A549 (cell line): ENCODE measurements at regions of chr2 and their contacts with region 1.

Region 1: DNA sequence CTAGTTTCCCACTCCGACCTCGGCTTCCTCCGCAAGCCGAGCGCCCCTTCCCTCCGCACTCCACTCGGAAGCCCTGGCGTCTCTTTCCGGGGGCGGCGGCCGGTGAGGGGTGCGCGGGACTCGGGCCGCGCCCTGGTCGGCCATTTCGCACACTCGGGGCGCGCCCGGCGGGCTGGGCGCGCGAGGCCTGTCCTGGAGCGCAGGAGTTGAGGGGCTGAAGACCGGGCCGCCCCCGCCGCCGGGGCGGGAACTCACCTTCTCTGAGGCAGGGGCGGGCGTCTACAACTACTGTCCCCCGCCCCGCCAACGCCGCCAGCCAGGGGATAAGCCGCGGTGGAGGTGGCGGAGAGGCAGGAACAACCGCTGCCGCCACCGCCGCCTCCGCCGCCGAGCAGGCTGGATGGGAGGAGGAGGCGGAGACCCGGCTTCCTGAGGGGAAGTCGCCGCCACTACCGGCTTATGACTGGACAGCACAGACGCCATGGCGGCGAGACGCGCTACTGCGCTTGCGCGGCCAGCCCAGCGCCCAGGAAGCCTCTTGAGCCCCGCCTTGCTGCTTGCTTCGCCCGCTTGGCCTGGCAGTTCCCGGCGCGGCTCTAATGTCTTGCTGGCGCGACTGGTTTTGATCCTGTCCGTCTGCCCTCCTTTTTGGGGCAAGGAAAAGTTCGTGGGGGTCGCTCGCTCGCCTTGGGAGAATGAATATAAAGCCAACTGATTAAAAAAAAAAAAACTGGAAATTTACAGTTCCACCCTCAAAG is at the start of gene KRCC1:
- DNase-seq: peak; percentile 92 to 98
- ATAC-seq: peak; percentile 91 to 97
- H3K4me3 ChIP-seq: peak within 1 kb of the TSS; percentile 81
- H3K27ac ChIP-seq: peak within 1 kb of the TSS; percentile 96 to 100
- H3K4me1 ChIP-seq: peaks cover 24% of the 10 kb centered on the region
- CTCF ChIP-seq: no peak
- EP300 ChIP-seq: no peak
- POLR2A ChIP-seq: peak; percentile 94
- RAD21 ChIP-seq: 0 out of 5 replicates have a peak, but pooled peaks of 1 of the 2 experiments have one; percentile 16
- polyA plus RNA-seq, gene KRCC1: 37.2 and 49.0 TPM in 2 replicates

Region 2: GRCh38 chr2:88016086-88016959 is 39.2 kb before region 1 on chr2 and contains the start of gene RNU2-63P:
- CTCF ChIA-PET with region 1: interaction called, 6 read pairs
- POLR2A ChIA-PET with region 1: interaction called, 11 read pairs
- DNase-seq: peak; percentile 93
- ATAC-seq: peak; percentile 90 to 95
- H3K4me3 ChIP-seq: peak within 1 kb of the TSS; percentile 65
- H3K27ac ChIP-seq: peak within 1 kb of the TSS; percentile 90 to 95
- H3K4me1 ChIP-seq: peaks cover 12% of the 10 kb centered on the region
- CTCF ChIP-seq: no peak
- EP300 ChIP-seq: no peak; a peak in 1 of 5 replicates
- POLR2A ChIP-seq: peak; percentile 74
- RAD21 ChIP-seq: 0 out of 5 replicates have a peak, but pooled peaks of 1 of the 2 experiments have one; percentile 3
- polyA plus RNA-seq, gene RNU2-63P: 23.1 and 33.0 TPM in 2 replicates

Region 3: DNA sequence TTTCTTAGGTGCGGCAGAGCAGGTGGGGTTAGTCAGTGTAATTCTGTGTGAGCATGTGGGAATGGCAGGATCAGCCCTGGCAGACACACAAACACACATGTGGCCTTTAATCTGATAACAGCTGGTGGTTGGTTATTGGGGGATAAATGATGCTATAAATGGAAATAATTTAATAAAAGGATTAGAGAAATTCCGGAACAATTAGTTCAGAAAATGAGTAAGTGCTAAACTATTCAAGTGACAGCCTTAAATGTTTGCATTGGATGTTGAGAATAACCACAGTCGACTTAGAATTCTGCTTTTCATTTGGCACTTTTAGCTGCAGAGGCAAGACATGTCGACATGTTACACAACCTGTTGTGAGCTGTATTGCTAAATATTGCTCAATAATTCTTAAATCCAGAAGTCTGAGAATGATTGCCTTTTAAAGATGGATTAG is 19.3 kb after region 1 on chr2:
- CTCF ChIA-PET with region 1: interaction called, 45 read pairs
- POLR2A ChIA-PET with region 1: no interaction called
- DNase-seq: no peak
- ATAC-seq: no peak
- H3K4me3 ChIP-seq: no peak overlapping the region
- H3K27ac ChIP-seq: no peak overlapping the region
- H3K4me1 ChIP-seq: no peaks in the 10 kb centered on the region
- CTCF ChIP-seq: no peak
- EP300 ChIP-seq: no peak
- POLR2A ChIP-seq: no peak
- RAD21 ChIP-seq: no peak

Region 4: GRCh38 chr2:88099798-88100488 is 44.4 kb after region 1 on chr2:
- CTCF ChIA-PET with region 1: interaction called, 16 read pairs
- POLR2A ChIA-PET with region 1: no interaction called
- DNase-seq: peak; percentile 12 to 37
- ATAC-seq: peak in 1 of 2 experiments; percentile 72; a peak in 3 of 6 replicates
- H3K4me3 ChIP-seq: no peak overlapping the region
- H3K27ac ChIP-seq: no peak overlapping the region
- H3K4me1 ChIP-seq: no peaks in the 10 kb centered on the region
- CTCF ChIP-seq: no peak
- EP300 ChIP-seq: no peak
- POLR2A ChIP-seq: no peak
- RAD21 ChIP-seq: no peak

Region 5: DNA sequence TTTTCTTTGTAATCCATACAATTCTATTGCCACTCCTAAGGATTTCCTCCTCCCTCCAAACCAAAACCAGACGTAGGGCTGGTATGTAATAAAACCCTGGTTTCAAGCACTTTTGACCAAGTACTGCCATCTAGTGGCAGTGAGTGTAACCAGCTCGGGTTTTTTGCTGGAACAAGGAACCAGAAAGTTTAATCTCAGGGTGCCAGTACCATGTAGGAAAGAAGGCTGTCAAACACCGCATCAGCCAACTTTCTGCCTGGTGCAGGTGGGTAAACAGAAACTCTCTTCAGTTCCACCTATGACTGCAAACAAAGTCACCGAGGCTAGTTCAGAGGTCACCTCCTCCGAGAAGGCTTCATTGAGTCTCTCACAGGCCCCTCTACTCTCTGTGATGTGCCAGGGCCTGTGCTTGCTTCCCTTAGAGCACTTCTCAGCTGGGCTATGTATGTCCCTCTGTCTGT is 104.4 kb after region 1 on chr2:
- CTCF ChIA-PET with region 1: interaction called, 181 read pairs
- POLR2A ChIA-PET with region 1: interaction called, 7 read pairs
- DNase-seq: peak; percentile 58 to 68
- ATAC-seq: peak; percentile 82 to 89
- H3K4me3 ChIP-seq: no peak overlapping the region
- H3K27ac ChIP-seq: no peak overlapping the region
- H3K4me1 ChIP-seq: no peaks in the 10 kb centered on the region
- CTCF ChIP-seq: peak; percentile 93
- EP300 ChIP-seq: no peak
- POLR2A ChIP-seq: no peak
- RAD21 ChIP-seq: peak; percentile 92 to 93

Region 6: DNA sequence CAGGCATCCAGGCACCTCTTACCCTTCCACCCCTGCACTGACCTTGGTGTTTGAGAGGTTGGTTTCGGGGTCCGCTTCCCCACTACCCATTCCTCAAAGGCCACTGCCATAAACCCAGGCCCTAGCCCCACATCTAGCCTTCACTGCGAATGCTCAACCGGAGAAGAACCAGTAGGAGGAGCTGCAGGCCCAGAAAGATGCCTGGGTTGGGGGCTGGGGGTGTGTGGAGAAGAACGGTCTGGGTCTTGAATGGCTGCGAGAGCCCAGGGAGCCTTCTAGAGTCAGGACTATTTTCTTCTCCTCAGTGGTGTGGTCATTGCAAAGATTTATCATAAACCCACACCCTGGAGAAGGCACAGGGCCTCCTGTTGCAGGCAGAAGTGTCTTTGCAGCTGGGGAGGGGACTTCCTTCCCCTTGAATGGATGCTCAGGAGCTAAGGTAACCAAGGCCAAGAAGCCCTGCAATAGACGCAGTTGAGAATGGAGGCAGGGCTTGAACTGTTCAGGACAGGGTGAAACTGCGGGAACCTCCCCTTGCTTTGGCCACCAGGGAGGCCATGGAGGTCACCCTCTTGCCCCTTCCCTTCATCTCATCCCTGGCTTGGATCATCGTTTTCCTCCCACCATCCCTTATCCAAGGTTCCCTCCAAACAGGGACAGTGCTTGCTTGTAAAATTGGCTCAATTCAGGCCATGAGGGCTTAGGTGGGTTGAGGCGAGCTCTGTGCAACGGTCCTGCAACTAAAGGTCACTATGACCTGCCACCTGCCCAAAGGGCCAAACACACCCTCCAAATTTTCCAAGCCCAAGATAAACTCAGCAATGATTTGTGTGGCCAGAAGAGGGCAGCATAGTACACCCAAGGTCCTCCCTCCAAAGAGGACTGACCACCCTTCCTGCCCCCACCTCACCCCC is 135.5 kb after region 1 on chr2:
- CTCF ChIA-PET with region 1: interaction called, 35 read pairs
- POLR2A ChIA-PET with region 1: no interaction called
- DNase-seq: peak; percentile 40 to 46
- ATAC-seq: peak in 1 of 2 experiments; percentile 44; a peak in 3 of 6 replicates
- H3K4me3 ChIP-seq: no peak overlapping the region
- H3K27ac ChIP-seq: no peak overlapping the region
- H3K4me1 ChIP-seq: no peaks in the 10 kb centered on the region
- CTCF ChIP-seq: peak; percentile 28; the same call in 2 of the 3 replicates
- EP300 ChIP-seq: no peak
- POLR2A ChIP-seq: no peak
- RAD21 ChIP-seq: peak; percentile 34 to 47; a peak in 3 of 5 replicates

Region 7: DNA sequence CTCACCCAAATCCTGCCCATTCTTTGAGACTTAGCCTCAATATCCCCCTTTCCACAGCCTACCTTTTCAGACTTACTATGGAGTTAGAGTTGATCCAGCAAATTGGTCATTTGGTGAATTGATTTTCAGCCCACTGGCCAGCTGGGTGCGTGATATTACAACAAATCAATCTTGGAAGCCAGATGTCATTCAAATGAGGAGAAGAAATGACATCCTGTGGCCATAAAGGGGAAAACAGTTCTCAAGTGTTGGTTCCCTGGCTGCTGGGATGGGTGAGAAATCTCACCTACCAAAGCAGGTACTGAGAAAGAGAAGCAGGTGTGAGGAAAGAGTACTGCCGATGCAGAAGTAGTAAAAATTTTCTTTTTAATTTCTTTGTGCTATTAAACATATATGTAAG is 433.6 kb after region 1 on chr2:
- CTCF ChIA-PET with region 1: no interaction called
- POLR2A ChIA-PET with region 1: no interaction called
- DNase-seq: peak in 1 of 2 experiments; percentile 10
- ATAC-seq: 0 out of 6 replicates have a peak, but pooled peaks of 1 of the 2 experiments have one; percentile 38
- H3K4me3 ChIP-seq: no peak overlapping the region
- H3K27ac ChIP-seq: no peak overlapping the region
- H3K4me1 ChIP-seq: no peaks in the 10 kb centered on the region
- CTCF ChIP-seq: no peak
- EP300 ChIP-seq: no peak
- POLR2A ChIP-seq: no peak
- RAD21 ChIP-seq: peak in 1 of 2 experiments; percentile 16; a peak in 1 of 5 replicates